ENCODE measurements at regions of chr12 and their contacts with region 1.

Region 1: DNA sequence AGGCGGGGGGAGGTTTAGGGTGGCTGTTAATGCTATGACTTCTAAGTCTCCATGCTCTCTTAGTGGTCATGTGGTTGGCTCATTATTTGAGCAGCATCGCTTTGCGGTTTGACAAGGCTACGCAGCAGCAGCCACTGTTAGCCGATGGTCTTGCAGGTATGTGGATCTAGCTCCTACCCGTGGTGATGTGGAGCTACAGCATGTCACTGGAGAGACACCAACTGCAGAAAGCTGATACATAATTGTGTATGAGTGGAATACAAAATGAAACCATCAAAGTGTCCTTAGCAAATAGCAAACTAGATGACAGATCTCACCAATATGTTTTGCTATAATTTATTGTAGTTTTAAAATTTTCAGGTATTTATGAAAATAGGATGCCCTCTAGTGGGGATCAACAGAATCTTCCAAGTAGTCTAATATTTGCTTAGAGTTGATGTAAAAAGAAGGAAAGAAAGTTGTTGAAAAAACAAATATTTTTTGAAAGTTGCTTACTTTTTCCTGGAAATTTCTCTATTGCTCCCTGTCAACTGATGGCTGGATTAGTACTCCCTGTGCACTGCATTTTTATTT is 94.9 kb downstream of the NAV3 start:
- DNase-seq: peak; percentile 56 to 79 (median 64)
- ATAC-seq: peak; percentile 96 to 100 (median 98)
- H3K4me3 ChIP-seq: no peak overlapping the region
- H3K27ac ChIP-seq: no peak overlapping the region
- H3K4me1 ChIP-seq: peaks cover 0 to 3% (median 0%) of the 10 kb centered on the region in 3 donors
- H3K27me3 ChIP-seq: no peaks in the 10 kb centered on the region
- CTCF ChIP-seq: peak; percentile 58 to 89 (median 74)

Region 2: GRCh38 chr12:77724367-77724957 is 201.2 kb before region 1 on chr12:
- intact Hi-C with region 1: loop called (anchors 5 to 10 kb)
- DNase-seq: peak in 1 of 6 donors; percentile 11
- ATAC-seq: peak; percentile 60 to 94 (median 90)
- H3K4me3 ChIP-seq: no peak overlapping the region
- H3K27ac ChIP-seq: no peak overlapping the region
- H3K4me1 ChIP-seq: no peaks in the 10 kb centered on the region
- H3K27me3 ChIP-seq: no peaks in the 10 kb centered on the region
- CTCF ChIP-seq: peak; percentile 16 to 44 (median 36)